Heart left ventricle (tissue), 16 donors: ENCODE measurements at regions of chr12 and their contacts with region 1.

Region 1: DNA sequence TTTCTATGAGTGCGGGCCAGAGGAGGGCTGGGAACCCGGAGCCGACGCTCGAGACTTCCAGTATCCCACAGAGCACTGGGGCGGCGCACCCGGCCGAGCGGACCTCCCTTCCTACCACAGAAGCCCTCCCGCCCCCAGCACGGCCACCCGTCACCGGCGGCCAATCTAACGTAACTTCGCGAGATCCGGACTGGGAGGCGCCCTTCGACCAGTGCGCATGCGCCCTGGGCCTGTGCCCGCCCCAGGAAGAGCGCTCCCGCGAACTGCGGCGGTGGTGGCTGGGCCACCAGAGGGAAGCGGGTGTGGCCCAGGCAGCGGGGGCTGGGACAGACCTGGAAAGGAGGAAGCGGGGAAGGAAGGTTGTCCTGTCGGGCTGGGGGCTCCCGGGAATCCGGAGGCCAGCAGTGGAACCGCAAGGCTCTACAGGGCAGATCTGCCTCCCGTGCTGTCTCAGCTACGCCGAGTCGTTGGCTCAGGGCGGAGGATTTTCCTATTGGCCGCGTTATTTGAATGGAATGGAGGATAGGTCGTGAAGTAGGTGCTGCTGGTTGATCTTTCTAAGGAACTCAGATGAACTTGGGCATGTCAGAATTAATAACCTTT is at the start of gene PPP1R12A:
- DNase-seq: peak; percentile 98 to 99 (median 98)
- ATAC-seq: peak; percentile 98
- H3K4me3 ChIP-seq: peak within 1 kb of the TSS; percentile 65 to 98 (median 90)
- H3K27ac ChIP-seq: peak within 1 kb of the TSS; percentile 95 to 99 (median 97)
- H3K4me1 ChIP-seq: peaks cover 0 to 49% (median 38%) of the 10 kb centered on the region in 12 donors
- H3K27me3 ChIP-seq: no peaks in the 10 kb centered on the region
- CTCF ChIP-seq: peak in 7 of 12 donors; percentile 6 to 42 (median 25)
- POLR2A ChIP-seq: peak; percentile 26 to 94
- total RNA-seq, gene PPP1R12A: 42.3 to 77.8 (median 54.9) TPM

Region 2: GRCh38 chr12:79690638-79691493 is 244.3 kb before region 1 on chr12 and contains the start of gene PAWR:
- intact Hi-C with region 1: loop called in 2 of 10 experiments (anchors 10 kb)
- DNase-seq: peak; percentile 43 to 82 (median 60)
- ATAC-seq: peak; percentile 52 to 81 (median 72)
- H3K4me3 ChIP-seq: peak within 1 kb of the TSS; percentile 60 to 99 (median 89)
- H3K27ac ChIP-seq: peak within 1 kb of the TSS; percentile 53 to 87 (median 70)
- H3K4me1 ChIP-seq: peaks cover 0 to 30% (median 7%) of the 10 kb centered on the region in 12 donors
- H3K27me3 ChIP-seq: peaks cover 0 to 44% (median 0%) of the 10 kb centered on the region in 9 donors
- CTCF ChIP-seq: peak in 3 of 12 donors; percentile 13 to 27 (median 15)
- POLR2A ChIP-seq: no peak
- total RNA-seq, gene PAWR: 4.8 to 29.0 (median 11.4) TPM

Region 3: DNA sequence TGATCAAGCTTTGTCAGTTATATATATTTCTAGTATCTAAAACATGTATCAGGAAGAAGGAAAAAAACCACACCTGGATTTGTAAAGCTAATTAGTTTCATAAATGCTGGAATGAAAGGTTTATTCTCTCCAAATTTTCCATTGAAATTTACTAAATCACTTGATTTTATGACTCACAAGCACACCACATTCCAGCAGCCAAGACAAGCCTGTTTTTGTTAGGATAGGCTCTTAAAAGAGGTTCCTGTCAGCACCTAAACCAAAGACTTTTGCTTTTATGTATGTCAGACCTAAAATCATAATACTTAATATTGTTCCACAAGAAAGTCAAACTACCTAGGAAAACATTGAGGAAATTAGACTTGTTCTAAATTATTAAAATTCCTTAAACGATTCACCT is 159.0 kb before region 1 on chr12:
- intact Hi-C with region 1: loop called in 3 of 10 experiments (anchors 5 to 10 kb)
- DNase-seq: no peak
- ATAC-seq: peak in 1 of 4 donors; percentile 63
- H3K4me3 ChIP-seq: no peak overlapping the region
- H3K27ac ChIP-seq: peak overlapping the region in 11 of 12 donors; percentile 1 to 44 (median 23)
- H3K4me1 ChIP-seq: peaks cover 0 to 21% (median 9%) of the 10 kb centered on the region in 12 donors
- H3K27me3 ChIP-seq: no peaks in the 10 kb centered on the region
- CTCF ChIP-seq: no peak
- POLR2A ChIP-seq: no peak

Region 4: DNA sequence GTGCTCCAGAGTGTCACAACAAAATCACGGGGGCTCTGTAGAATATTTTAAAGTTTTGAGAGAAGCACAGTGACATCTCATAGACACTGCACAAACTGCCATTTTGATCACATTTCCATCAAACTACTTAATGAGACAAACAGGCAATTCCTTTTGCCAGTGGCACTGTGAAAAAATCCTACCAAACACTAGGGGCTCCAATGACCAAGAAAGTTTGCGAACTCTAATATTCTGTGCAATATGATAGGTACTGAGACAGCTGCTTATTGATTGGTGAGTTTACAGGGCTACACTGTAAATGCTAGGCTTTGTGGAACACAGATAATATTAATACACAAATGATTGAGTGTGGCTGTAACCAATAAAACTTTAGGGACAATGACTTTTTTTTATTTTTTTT is 123.8 kb before region 1 on chr12:
- intact Hi-C with region 1: loop called in 4 of 10 experiments (anchors 5 to 10 kb)
- DNase-seq: no peak
- ATAC-seq: peak in 1 of 4 donors; percentile 24
- H3K4me3 ChIP-seq: no peak overlapping the region
- H3K27ac ChIP-seq: no peak overlapping the region
- H3K4me1 ChIP-seq: peaks cover 0 to 13% (median 0%) of the 10 kb centered on the region in 12 donors
- H3K27me3 ChIP-seq: no peaks in the 10 kb centered on the region
- CTCF ChIP-seq: peak in 1 of 12 donors; percentile 23
- POLR2A ChIP-seq: no peak

Region 5: DNA sequence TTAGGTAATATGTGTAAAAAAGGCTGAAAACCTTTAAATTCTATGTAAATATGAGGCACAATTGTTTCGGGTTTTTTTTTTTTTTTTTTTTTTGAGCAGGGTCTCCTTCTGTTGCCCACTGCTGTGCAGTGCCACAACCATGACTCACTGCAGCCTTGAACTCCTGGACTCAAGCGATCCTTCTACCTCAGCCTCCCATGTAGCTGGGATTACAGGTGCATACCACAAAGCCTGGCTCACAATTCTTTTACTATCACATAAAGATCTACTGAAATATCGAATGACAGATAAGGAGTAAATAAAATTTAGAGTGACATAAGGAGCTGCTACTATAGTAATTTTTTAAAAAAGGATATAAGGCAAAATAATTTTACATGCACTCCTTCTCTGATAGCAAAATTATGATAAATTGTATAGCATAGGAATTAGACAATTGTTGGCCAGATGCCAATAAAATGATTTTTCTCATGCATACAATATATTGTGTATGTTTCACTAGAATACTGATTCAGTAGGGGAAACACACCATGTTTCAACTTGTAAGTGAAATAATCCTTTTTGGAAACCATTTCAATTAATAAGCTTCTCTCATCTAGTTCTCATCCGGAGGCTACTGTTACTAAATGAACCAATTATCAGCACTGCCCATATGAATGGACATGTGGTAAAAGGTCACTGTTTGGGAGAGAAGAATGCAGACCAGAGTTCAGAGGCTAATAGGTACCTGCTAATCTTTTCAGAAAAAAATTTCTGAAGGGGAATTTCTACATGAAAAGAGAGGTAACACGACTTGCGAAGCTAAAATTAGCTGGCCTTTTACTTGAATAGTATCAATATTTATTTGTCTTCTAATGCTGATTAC is 108.6 kb before region 1 on chr12:
- intact Hi-C with region 1: loop called in 1 of 10 experiments (anchors 10 kb)
- DNase-seq: no peak
- ATAC-seq: no peak
- H3K4me3 ChIP-seq: no peak overlapping the region
- H3K27ac ChIP-seq: no peak overlapping the region
- H3K4me1 ChIP-seq: peaks cover 0 to 43% (median 18%) of the 10 kb centered on the region in 12 donors
- H3K27me3 ChIP-seq: no peaks in the 10 kb centered on the region
- CTCF ChIP-seq: no peak
- POLR2A ChIP-seq: no peak

Region 6: DNA sequence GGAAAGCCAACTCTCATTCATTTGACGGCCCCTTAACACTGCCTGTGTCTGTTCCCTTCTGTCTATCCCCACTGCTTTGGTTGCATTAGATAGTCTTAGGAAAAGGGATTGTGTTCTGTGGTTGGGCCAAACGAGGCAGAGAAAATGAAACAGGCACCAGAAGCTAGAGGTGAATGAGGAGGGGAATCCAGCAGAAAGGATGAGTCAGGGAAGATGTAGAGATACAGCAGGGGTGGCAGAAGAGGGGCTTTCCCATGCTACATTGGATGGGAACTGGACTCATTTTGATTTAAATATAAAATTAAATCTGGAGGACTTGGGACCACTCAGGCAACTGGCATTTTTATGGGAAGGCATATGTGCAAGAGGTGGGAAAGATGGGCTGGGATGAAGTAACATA is 207.5 kb after region 1 on chr12:
- intact Hi-C with region 1: no loop called
- DNase-seq: no peak
- ATAC-seq: no peak
- H3K4me3 ChIP-seq: no peak overlapping the region
- H3K27ac ChIP-seq: no peak overlapping the region
- H3K4me1 ChIP-seq: no peaks in the 10 kb centered on the region
- H3K27me3 ChIP-seq: no peaks in the 10 kb centered on the region
- CTCF ChIP-seq: no peak
- POLR2A ChIP-seq: no peak

Region 7: DNA sequence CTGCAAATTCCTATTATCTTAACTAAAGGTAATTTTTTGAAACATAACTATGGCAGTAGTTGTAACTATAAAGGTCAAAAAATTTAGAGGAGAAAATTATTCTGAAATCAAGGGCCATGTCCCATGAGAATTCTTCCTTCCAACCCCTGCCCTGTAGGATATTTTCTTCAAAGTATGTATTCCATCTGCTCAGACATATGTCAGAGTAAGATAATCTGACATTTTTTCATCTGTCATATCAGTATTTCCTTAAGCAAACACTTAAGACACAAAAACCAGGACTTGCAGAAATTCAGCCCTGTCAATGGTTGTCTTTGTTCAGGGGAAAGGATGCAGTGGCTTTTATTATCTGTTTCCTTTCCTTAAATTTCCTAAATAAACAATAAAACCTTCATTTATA is 1179.1 kb after region 1 on chr12:
- intact Hi-C with region 1: no loop called
- DNase-seq: no peak
- ATAC-seq: no peak
- H3K4me3 ChIP-seq: no peak overlapping the region
- H3K27ac ChIP-seq: no peak overlapping the region
- H3K4me1 ChIP-seq: no peaks in the 10 kb centered on the region
- H3K27me3 ChIP-seq: no peaks in the 10 kb centered on the region
- CTCF ChIP-seq: no peak
- POLR2A ChIP-seq: no peak